ENCODE measurements at regions of chrX and their contacts with region 1.

Region 1: DNA sequence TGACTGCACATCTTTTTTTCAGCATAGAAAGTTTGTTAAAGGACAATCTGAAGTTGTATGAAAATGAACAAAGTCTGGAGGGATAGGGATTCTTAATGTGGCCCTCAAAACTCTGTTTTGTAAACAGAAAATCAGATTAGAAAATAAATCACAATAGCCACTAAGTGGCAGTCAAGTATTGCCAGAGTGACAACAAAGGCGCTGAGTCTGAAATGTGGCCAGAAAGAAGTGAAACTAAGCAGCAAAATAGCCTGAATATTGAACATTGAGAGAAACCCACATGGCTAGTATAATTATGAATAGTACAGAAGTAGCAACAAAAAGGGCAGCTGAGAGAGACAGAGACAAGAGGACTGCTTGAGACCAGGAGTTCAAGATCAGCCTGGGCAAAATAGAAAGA is 81.1 kb upstream of the CT45A1 start:
- DNase-seq: peak; percentile 21
- ATAC-seq: peak; percentile 91
- H3K4me3 ChIP-seq: no peak overlapping the region
- H3K27ac ChIP-seq: no peak overlapping the region
- H3K4me1 ChIP-seq: no peaks in the 10 kb centered on the region; the same call in 1 of the 2 replicates
- H3K27me3 ChIP-seq: no peaks in the 10 kb centered on the region
- CTCF ChIP-seq: peak; percentile 22 to 67 (median 25); a peak in 4 of 6 replicates
- EP300 ChIP-seq: no peak
- POLR2A ChIP-seq: no peak
- RAD21 ChIP-seq: peak; percentile 79

Region 2: DNA sequence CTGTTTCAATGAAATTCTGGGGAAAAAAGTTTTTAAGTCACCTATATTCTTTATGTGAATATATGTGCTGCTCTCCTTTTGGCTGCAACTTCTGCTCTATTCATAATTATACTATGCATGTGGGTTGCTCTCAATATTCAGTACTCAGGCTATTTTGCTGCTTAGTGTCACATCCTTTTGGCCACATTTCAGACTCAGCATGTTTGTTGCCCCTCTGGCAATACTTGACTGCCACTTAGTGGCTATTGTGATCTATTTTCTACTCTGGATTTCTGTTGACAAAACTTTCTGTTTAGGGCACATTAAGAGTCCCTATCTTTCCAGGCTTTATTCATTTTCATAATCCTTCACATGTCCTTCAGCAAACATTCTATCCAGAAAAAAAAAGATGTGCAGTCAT is 65.2 kb after region 1 on chrX:
- CTCF ChIA-PET with region 1: interaction called, 37 read pairs
- POLR2A ChIA-PET with region 1: no interaction called
- RAD21 ChIA-PET with region 1: interaction called, 3 read pairs
- SMC1A ChIA-PET with region 1: interaction called, 4 read pairs
- in situ Hi-C with region 1: no loop called
- intact Hi-C with region 1: loop called (anchors 1 kb)
- DNase-seq: no peak
- ATAC-seq: peak; percentile 51
- H3K4me3 ChIP-seq: no peak overlapping the region
- H3K27ac ChIP-seq: no peak overlapping the region
- H3K4me1 ChIP-seq: no peaks in the 10 kb centered on the region
- H3K27me3 ChIP-seq: no peaks in the 10 kb centered on the region; a peak in 1 of 4 replicates
- CTCF ChIP-seq: peak; percentile 21 to 61 (median 23); a peak in 4 of 6 replicates
- EP300 ChIP-seq: no peak
- POLR2A ChIP-seq: no peak
- RAD21 ChIP-seq: peak; percentile 70

Region 3: GRCh38 chrX:135707880-135708279 is 75.5 kb after region 1 on chrX:
- CTCF ChIA-PET with region 1: interaction called, 10 read pairs
- POLR2A ChIA-PET with region 1: no interaction called
- RAD21 ChIA-PET with region 1: no interaction called
- SMC1A ChIA-PET with region 1: no interaction called
- in situ Hi-C with region 1: no loop called
- intact Hi-C with region 1: no loop called
- DNase-seq: no peak
- ATAC-seq: peak; percentile 84
- H3K4me3 ChIP-seq: no peak overlapping the region
- H3K27ac ChIP-seq: no peak overlapping the region
- H3K4me1 ChIP-seq: no peaks in the 10 kb centered on the region
- H3K27me3 ChIP-seq: no peaks in the 10 kb centered on the region
- CTCF ChIP-seq: peak; percentile 54 to 63 (median 62); a peak in 5 of 6 replicates
- EP300 ChIP-seq: no peak
- POLR2A ChIP-seq: no peak
- RAD21 ChIP-seq: peak; percentile 50